Left ventricle myocardium superior (tissue), 1 donor: ENCODE measurements at regions of chr12 and their contacts with region 1.

Region 1: DNA sequence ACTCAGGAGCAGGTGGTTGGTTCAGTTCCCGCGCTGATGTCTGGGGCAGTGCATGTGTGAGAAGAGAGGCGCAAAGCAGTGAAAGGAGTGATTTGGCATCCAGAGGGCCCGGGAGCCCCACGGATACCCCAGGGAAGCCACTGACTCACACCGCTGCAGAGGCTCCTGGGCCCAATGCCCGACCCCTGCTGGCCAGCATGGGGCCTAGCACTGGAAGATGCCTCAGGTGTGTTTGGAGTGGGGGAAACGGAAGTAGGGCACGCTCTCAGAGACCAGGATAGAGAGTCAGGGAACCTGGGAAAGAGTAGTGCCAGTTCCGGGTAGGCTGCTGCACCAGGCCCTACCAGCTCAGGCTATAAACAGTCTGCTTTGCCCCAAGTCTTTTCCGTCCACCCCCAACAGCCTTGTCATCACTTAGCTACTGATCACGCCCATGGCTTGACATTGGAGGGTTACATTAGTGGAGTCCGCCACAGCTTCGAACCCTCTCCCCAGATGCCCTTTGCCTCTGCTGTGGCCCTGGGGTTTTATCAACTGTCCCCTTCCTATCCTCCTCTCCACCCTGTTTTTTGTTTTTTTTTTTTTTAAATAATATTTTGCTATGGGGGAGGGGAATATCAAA is 9.5 kb upstream of the CSAD start:
- DNase-seq: peak; percentile 79
- ATAC-seq: peak; percentile 78

Region 2: DNA sequence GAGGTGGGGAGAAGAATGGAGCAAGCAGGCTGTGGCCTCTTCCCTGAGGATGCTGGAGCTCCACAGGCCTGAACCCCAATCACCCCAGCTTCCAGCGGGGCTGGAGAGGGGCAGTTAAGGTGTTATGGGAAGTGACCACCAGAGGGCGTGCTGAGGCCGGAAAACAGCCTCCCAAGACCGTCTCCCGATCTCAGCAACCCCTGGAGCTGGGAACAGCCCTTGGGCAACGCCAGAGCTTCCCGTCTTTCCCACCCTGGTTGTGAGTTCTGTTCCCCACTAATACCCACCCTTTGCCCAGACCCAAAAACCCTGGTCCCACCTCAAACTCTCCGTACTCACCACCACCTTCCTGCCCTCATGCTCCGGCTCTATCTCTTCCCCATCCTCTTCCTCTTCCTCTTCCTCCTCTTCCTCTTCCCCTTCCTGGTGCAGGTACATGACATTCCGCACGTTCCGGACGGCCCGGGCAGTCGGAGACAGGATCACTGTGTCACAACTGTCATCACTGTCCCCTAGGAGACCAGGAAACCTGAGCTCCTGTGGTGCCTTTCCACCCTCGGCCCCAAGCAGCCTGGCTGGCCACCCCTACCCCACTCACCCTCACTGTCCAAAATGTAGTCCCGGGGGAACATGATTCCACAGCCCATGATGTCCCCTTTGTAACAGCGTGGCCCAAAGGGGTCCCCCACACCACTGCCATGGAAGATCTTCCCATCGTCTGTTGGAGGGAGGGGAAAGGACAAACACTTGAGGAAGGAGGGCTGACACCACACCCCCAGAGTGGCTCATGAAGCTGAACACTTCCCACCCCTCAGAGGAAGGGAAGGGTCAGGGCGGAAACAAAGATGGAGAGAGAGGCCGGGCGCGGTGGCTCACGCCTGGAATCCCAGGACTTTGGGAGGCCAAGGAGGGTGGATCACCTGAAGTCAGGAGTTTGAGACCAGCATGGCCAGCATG is 124.0 kb before region 1 on chr12:
- intact Hi-C with region 1: loop called (anchors 10 kb)
- DNase-seq: peak; percentile 86
- ATAC-seq: peak; percentile 59

Region 3: DNA sequence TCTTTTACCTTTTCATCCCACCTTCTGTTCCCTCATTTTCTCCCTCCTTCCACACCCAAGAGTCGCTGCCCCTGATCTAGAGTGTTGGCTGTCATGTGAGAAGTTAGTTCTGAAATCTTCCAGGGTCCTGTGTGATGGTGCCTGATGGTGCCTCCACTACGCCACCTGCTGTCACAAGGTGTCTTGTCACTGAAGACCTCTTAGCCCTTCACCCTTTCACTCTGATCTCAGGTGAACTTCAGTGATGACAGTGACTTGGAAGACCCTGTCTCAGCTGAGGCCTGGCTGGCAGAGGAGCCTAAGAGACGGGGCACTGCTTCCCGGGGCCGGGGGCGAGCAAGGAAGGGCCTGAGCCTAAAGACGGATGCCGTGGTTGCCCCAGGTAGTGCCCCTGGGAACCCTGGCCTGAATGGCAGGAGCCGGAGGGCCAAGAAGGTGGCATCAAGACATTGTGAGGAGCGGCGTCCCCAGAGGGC is 97.6 kb after region 1 on chr12:
- intact Hi-C with region 1: no loop called
- DNase-seq: peak; percentile 78
- ATAC-seq: peak; percentile 85